H1 (cell line): ENCODE measurements at regions of chr18 and their contacts with region 1.

Region 1: DNA sequence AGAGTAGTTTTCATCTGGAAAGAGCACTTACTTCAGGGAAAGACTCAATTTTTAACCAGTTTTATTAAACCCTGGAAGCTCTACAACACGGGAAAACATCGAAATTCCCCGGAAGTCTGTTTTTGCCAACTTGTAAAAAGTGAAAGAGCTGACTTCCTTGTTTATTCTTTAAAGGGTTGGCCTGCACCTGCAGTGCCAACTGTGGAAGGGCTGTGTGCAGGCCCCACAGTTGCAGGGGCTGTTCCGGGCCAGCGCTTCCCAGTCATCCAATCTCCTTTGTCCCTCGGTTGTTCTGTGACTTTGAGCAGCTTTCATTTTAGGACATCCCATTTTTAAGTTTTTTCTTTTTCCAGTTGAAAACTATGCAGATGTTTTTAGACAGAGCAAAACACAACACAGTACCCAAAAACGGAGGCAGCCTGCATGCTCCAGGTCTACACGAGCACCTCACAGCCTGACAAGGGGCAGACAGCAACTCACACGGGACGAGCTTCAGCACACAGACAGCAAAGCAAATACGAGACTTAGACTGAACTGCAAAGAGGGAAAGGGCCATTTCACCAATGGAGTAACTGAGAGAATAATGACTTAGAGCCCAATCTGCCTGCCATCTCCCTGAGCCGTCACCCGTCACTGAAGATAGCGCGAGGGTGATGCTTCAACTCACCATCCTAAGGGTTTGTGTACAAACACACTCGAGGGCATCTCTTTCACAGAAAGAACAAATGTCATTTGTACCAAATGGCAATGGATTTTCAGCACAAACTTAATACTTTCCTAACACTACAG is 70.6 kb downstream of the EMILIN2 start:
- DNase-seq: peak in 1 of 2 experiments; percentile 41
- H3K4me3 ChIP-seq: no peak overlapping the region
- H3K27ac ChIP-seq: no peak overlapping the region
- H3K4me1 ChIP-seq: peaks cover 0 to 8% (median 5%) of the 10 kb centered on the region in 4 experiments; a peak in 5 of 7 replicates
- H3K27me3 ChIP-seq: no peaks in the 10 kb centered on the region
- CTCF ChIP-seq: no peak
- EP300 ChIP-seq: no peak
- POLR2A ChIP-seq: no peak
- RAD21 ChIP-seq: no peak

Region 2: GRCh38 chr18:2794159-2794558 is 123.3 kb before region 1 on chr18:
- CTCF ChIA-PET with region 1: no interaction called
- POLR2A ChIA-PET with region 1: no interaction called
- DNase-seq: no peak
- H3K4me3 ChIP-seq: no peak overlapping the region
- H3K27ac ChIP-seq: no peak overlapping the region
- H3K4me1 ChIP-seq: no peaks in the 10 kb centered on the region
- H3K27me3 ChIP-seq: no peaks in the 10 kb centered on the region
- CTCF ChIP-seq: no peak
- EP300 ChIP-seq: no peak
- POLR2A ChIP-seq: no peak
- RAD21 ChIP-seq: no peak

Region 3: DNA sequence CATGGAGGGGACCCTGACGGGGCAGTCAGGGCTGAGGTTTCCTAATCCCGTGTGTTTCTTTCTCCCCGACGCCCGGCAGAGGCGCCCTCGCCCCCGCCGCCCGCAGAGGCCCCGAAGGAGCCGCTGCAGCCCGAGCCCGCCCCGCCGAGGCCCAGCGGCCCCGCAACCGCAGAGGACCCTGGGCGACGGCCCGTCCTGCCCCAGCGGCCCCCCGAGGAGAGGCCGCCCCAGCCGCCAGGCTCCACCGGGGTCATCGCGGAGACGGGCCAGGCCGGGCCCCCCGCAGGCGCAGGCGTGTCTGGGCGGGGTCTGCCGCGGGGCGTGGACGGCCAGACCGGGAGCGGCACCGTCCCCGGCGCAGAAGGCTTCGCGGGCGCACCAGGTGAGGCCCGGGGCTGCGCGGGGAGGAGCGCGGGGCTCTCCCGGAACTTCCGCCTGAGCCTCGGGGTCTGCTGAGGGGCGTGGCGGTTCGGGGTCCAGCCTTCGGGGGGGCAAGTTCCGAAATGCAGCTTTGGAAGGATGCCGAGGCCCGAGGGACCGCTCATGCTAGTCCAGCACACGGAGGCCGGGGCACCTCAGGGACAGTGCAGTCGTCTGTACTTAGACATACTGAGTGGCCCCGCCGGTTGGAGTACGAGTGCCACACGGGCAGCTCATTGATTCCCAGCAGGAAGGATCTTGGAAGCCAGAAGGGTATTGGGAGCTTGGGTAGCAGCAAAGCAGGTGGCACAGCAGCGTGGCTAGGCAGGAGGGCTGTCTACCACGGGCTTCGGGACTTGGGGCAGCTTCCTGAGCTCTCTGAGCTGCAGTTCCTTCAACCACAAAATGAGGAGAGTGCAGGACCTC is 10.5 kb before region 1 on chr18:
- CTCF ChIA-PET with region 1: interaction called, 14 read pairs
- POLR2A ChIA-PET with region 1: interaction called, 5 read pairs
- DNase-seq: peak in 1 of 2 experiments; percentile 77
- H3K4me3 ChIP-seq: peak overlapping the region; percentile 54 to 97 (median 74)
- H3K27ac ChIP-seq: no peak overlapping the region; the same call in 1 of the 2 replicates
- H3K4me1 ChIP-seq: peaks cover 0 to 6% (median 4%) of the 10 kb centered on the region in 4 experiments; a peak in 5 of 7 replicates
- H3K27me3 ChIP-seq: peaks cover 0 to 2% (median 0%) of the 10 kb centered on the region in 4 experiments; a peak in 3 of 7 replicates
- CTCF ChIP-seq: peak in 2 of 3 experiments; percentile 6 to 41; a peak in 3 of 4 replicates
- EP300 ChIP-seq: no peak
- POLR2A ChIP-seq: peak in 1 of 2 experiments; percentile 29; a peak in 1 of 3 replicates
- RAD21 ChIP-seq: no peak; a peak in 2 of 4 replicates

Region 4: GRCh38 chr18:2939317-2939716 is 21.9 kb after region 1 on chr18:
- CTCF ChIA-PET with region 1: no interaction called
- POLR2A ChIA-PET with region 1: no interaction called
- DNase-seq: no peak
- H3K4me3 ChIP-seq: no peak overlapping the region
- H3K27ac ChIP-seq: no peak overlapping the region
- H3K4me1 ChIP-seq: no peaks in the 10 kb centered on the region
- H3K27me3 ChIP-seq: no peaks in the 10 kb centered on the region
- CTCF ChIP-seq: no peak
- EP300 ChIP-seq: no peak
- POLR2A ChIP-seq: no peak
- RAD21 ChIP-seq: no peak

Region 5: GRCh38 chr18:3230401-3231334 is 313.2 kb after region 1 on chr18:
- CTCF ChIA-PET with region 1: no interaction called
- POLR2A ChIA-PET with region 1: no interaction called
- DNase-seq: no peak
- H3K4me3 ChIP-seq: no peak overlapping the region
- H3K27ac ChIP-seq: no peak overlapping the region
- H3K4me1 ChIP-seq: peaks cover 0 to 8% (median 2%) of the 10 kb centered on the region in 4 experiments; a peak in 4 of 7 replicates
- H3K27me3 ChIP-seq: no peaks in the 10 kb centered on the region; a peak in 1 of 7 replicates
- CTCF ChIP-seq: no peak
- EP300 ChIP-seq: no peak
- POLR2A ChIP-seq: no peak
- RAD21 ChIP-seq: no peak